Activated CD4-positive, alpha-beta T cell treated with anti-CD3 and anti-CD28 coated beads for 36 hours (primary cell): ENCODE measurements at regions of chr1 and their contacts with region 1.

Region 1: GRCh38 chr1:45864167-45865106 is 61.0 kb downstream of the MAST2 start:
- DNase-seq: no peak
- ATAC-seq: no peak
- H3K4me3 Mint-ChIP-seq: no peak overlapping the region
- H3K27ac Mint-ChIP-seq: peak overlapping the region; percentile 4
- H3K4me1 Mint-ChIP-seq: peaks cover 47% of the 10 kb centered on the region
- H3K27me3 Mint-ChIP-seq: no peaks in the 10 kb centered on the region

Region 2: GRCh38 chr1:45230540-45230939 is 633.9 kb before region 1 on chr1:
- CTCF ChIA-PET with region 1: no interaction called
- POLR2A ChIA-PET with region 1: no interaction called
- intact Hi-C with region 1: no loop called
- DNase-seq: peak; percentile 14
- ATAC-seq: no peak
- H3K4me3 Mint-ChIP-seq: no peak overlapping the region
- H3K27ac Mint-ChIP-seq: no peak overlapping the region
- H3K4me1 Mint-ChIP-seq: no peaks in the 10 kb centered on the region
- H3K27me3 Mint-ChIP-seq: no peaks in the 10 kb centered on the region

Region 3: GRCh38 chr1:45887156-45887842 is 22.9 kb after region 1 on chr1:
- CTCF ChIA-PET with region 1: interaction called, 5 read pairs
- POLR2A ChIA-PET with region 1: no interaction called
- intact Hi-C with region 1: loop called in 1 of 2 experiments (anchors 2 kb)
- DNase-seq: peak; percentile 42
- ATAC-seq: peak; percentile 83
- H3K4me3 Mint-ChIP-seq: no peak overlapping the region
- H3K27ac Mint-ChIP-seq: peak overlapping the region; percentile 75
- H3K4me1 Mint-ChIP-seq: peaks cover 26% of the 10 kb centered on the region
- H3K27me3 Mint-ChIP-seq: no peaks in the 10 kb centered on the region

Region 4: GRCh38 chr1:45957684-45958083 is 93.2 kb after region 1 on chr1:
- CTCF ChIA-PET with region 1: no interaction called
- POLR2A ChIA-PET with region 1: no interaction called
- intact Hi-C with region 1: no loop called
- DNase-seq: no peak
- ATAC-seq: no peak
- H3K4me3 Mint-ChIP-seq: no peak overlapping the region
- H3K27ac Mint-ChIP-seq: no peak overlapping the region
- H3K4me1 Mint-ChIP-seq: no peaks in the 10 kb centered on the region
- H3K27me3 Mint-ChIP-seq: no peaks in the 10 kb centered on the region